ENCODE measurements at regions of chr6 and their contacts with region 1.

Region 1: GRCh38 chr6:81752138-81752920 is at the start of gene TENT5A:
- DNase-seq: peak; percentile 94 to 96 (median 96)
- ATAC-seq: peak; percentile 83 to 85 (median 84)
- H3K4me3 ChIP-seq: peak within 1 kb of the TSS; percentile 77 to 95 (median 86)
- H3K27ac ChIP-seq: peak within 1 kb of the TSS; percentile 93 to 99 (median 97)
- H3K4me1 ChIP-seq: peaks cover 0 to 36% (median 13%) of the 10 kb centered on the region in 12 donors
- H3K27me3 ChIP-seq: no peaks in the 10 kb centered on the region
- CTCF ChIP-seq: peak in 3 of 12 donors; percentile 22 to 37 (median 35)
- POLR2A ChIP-seq: peak; percentile 30 to 97
- total RNA-seq, gene TENT5A: 25.7 to 47.2 (median 41.4) TPM

Region 2: DNA sequence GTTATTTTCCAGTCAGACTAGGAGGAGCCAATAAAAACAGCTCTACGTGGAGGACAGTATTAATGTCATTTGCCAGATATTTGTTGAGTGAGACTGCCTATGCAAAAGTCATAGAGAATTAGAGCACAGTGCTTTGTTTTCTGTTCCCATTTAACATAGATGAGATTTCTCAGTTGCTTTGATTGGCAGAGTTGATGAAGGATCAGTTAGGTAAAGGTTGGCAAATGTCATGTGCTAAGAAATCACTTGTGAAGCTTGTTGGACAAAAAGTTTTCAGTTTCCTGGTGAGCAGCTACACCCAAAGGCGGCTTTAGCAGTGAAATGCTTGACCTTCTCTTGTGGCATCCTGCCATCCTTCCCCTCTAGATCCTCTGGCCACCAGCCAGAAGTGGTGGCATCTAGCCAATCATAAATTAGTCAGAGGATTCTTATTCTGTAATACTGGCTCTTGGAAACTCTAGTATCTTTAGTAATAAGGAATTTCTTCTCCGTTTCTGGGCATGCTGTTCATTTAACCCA is 1608.9 kb before region 1 on chr6:
- intact Hi-C with region 1: loop called in 2 of 10 experiments (anchors 10 kb)
- DNase-seq: peak in 4 of 5 donors; percentile 48 to 81 (median 63)
- ATAC-seq: peak; percentile 35 to 85 (median 69)
- H3K4me3 ChIP-seq: no peak overlapping the region
- H3K27ac ChIP-seq: peak overlapping the region in 4 of 12 donors; percentile 0 to 69 (median 14)
- H3K4me1 ChIP-seq: peaks cover 3 to 35% (median 22%) of the 10 kb centered on the region in 12 donors
- H3K27me3 ChIP-seq: no peaks in the 10 kb centered on the region
- CTCF ChIP-seq: no peak
- POLR2A ChIP-seq: no peak

Region 3: DNA sequence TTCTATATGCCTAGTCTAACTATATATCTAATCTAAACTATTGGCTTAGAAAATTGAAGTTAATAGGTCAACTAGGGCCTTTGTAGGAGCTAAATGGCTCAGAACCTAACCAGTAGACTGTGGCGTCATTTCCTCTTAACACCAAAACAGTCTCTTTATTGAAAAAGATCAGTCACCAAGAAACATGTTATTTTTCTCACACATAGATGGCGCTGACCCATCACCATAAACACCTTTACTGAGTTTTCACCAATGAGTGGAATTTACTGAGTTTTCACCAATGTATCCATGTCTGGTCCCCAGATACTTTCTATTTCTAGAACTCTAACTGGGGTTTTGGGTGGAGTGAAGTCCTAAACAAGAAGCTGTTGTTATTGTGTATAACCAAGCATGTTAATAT is 1009.8 kb before region 1 on chr6:
- intact Hi-C with region 1: loop called in 3 of 10 experiments (anchors 10 kb)
- DNase-seq: peak in 1 of 5 donors; percentile 6
- ATAC-seq: no peak
- H3K4me3 ChIP-seq: no peak overlapping the region
- H3K27ac ChIP-seq: no peak overlapping the region
- H3K4me1 ChIP-seq: peaks cover 0 to 3% (median 0%) of the 10 kb centered on the region in 12 donors
- H3K27me3 ChIP-seq: no peaks in the 10 kb centered on the region
- CTCF ChIP-seq: peak in 10 of 12 donors; percentile 14 to 56 (median 34)
- POLR2A ChIP-seq: no peak

Region 4: GRCh38 chr6:81589461-81590323 is 162.6 kb before region 1 on chr6:
- intact Hi-C with region 1: loop called in 2 of 10 experiments (anchors 2 to 10 kb)
- DNase-seq: peak in 1 of 5 donors; percentile 28
- ATAC-seq: peak in 2 of 4 donors; percentile 50 to 52
- H3K4me3 ChIP-seq: no peak overlapping the region
- H3K27ac ChIP-seq: no peak overlapping the region
- H3K4me1 ChIP-seq: peaks cover 0 to 4% (median 0%) of the 10 kb centered on the region in 12 donors
- H3K27me3 ChIP-seq: no peaks in the 10 kb centered on the region
- CTCF ChIP-seq: peak in 2 of 12 donors; percentile 6 to 16
- POLR2A ChIP-seq: no peak

Region 5: GRCh38 chr6:81834141-81834681 is 81.9 kb after region 1 on chr6:
- intact Hi-C with region 1: loop called in 1 of 10 experiments (anchors 5 kb)
- DNase-seq: peak; percentile 55 to 89 (median 66)
- ATAC-seq: peak; percentile 98 to 99 (median 99)
- H3K4me3 ChIP-seq: no peak overlapping the region
- H3K27ac ChIP-seq: peak overlapping the region; percentile 56 to 82 (median 74)
- H3K4me1 ChIP-seq: peaks cover 0 to 21% (median 16%) of the 10 kb centered on the region in 12 donors
- H3K27me3 ChIP-seq: no peaks in the 10 kb centered on the region
- CTCF ChIP-seq: peak in 4 of 12 donors; percentile 5 to 26 (median 10)
- POLR2A ChIP-seq: no peak

Region 6: GRCh38 chr6:82006027-82006738 is 253.9 kb after region 1 on chr6:
- intact Hi-C with region 1: loop called in 2 of 10 experiments (anchors 10 kb)
- DNase-seq: peak in 2 of 5 donors; percentile 26 to 27
- ATAC-seq: peak in 3 of 4 donors; percentile 55 to 68 (median 61)
- H3K4me3 ChIP-seq: no peak overlapping the region
- H3K27ac ChIP-seq: no peak overlapping the region
- H3K4me1 ChIP-seq: no peaks in the 10 kb centered on the region
- H3K27me3 ChIP-seq: no peaks in the 10 kb centered on the region
- CTCF ChIP-seq: peak in 11 of 12 donors; percentile 30 to 57 (median 45)
- POLR2A ChIP-seq: no peak